Activated CD8-positive, alpha-beta T cell treated with anti-CD3 and anti-CD28 coated beads, Interleukin-2, amount 10 ng/mL, durations not matched to agents 7 days and 5 days (primary cell): ENCODE measurements at regions of chr6 and their contacts with region 1.

Region 1: GRCh38 chr6:35415065-35415991 is 36.8 kb upstream of the FANCE start:
- DNase-seq: peak; percentile 34
- ATAC-seq: no peak
- H3K4me3 Mint-ChIP-seq: no peak overlapping the region
- H3K27ac Mint-ChIP-seq: peak overlapping the region; percentile 78
- H3K4me1 Mint-ChIP-seq: peaks cover 84% of the 10 kb centered on the region
- H3K27me3 Mint-ChIP-seq: no peaks in the 10 kb centered on the region

Region 2: DNA sequence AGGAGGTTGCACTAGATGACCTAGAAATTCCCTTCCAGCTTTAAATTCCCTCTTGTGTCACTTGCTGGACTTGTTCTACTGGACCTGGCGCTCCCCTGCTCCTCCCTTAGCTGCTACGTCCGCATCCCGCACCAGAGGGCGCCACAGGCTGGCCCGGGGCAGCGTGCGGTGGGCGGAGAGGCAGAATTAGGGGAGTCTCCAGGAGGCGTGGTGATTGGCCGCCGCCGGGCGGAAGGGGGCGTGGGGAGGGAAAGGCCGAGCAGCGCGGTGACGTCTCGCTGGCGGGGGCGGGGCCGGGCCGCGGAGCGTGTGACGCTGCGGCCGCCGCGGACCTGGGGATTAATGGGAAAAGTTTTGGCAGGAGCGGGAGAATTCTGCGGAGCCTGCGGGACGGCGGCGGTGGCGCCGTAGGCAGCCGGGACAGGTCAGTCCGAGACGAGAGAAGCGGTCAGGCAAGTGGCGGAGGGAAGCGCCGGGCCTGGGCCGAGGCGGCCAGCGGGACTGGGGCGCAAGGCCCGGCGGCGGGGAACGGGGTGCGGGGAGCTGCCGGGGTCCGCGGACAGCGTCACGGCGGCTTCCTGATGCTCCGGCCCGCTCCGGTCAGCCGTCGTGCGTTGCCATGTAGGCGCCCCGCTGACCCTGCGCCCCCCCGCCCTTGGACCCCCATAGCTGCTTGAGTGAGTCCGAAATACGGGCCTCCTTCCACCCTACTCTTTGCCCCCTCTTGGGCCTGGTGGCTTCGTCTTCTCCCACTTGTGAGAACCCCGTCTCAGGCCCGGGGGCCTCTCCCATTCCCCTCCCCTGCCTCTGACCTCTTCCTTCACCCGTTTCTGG is 72.9 kb before region 1 on chr6 and contains the start of gene PPARD:
- CTCF ChIA-PET with region 1: interaction called, 28 read pairs
- POLR2A ChIA-PET with region 1: no interaction called
- DNase-seq: peak; percentile 98
- ATAC-seq: peak; percentile 99
- H3K4me3 Mint-ChIP-seq: peak within 1 kb of the TSS; percentile 90
- H3K27ac Mint-ChIP-seq: peak within 1 kb of the TSS; percentile 92
- H3K4me1 Mint-ChIP-seq: peaks cover 51% of the 10 kb centered on the region
- H3K27me3 Mint-ChIP-seq: peaks cover 4% of the 10 kb centered on the region
- total RNA-seq, gene PPARD: 36.3 to 36.7 TPM

Region 3: DNA sequence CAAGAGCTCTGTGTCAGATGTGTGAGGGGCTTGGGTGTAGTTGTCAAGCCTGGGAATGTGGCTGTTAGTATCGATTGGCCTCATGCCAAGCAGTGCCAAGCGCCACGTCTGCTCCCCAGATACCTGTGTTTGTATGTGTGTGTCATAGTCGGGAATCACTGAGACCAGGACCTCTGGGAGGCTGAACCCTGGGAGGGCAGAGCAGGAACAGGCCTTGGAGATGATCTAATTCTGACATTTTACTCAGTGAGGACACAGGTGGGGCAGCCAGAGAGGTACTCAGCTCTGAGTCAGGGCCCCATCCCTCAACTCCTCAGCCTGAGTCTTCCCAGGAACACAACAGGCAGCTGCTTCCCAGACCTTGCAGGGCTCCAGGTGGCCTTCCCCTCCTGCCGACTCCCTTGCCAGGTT is 14.4 kb before region 1 on chr6:
- CTCF ChIA-PET with region 1: interaction called, 10 read pairs
- POLR2A ChIA-PET with region 1: no interaction called
- DNase-seq: no peak
- ATAC-seq: no peak
- H3K4me3 Mint-ChIP-seq: no peak overlapping the region
- H3K27ac Mint-ChIP-seq: peak overlapping the region; percentile 81
- H3K4me1 Mint-ChIP-seq: peaks cover 33% of the 10 kb centered on the region
- H3K27me3 Mint-ChIP-seq: no peaks in the 10 kb centered on the region

Region 4: DNA sequence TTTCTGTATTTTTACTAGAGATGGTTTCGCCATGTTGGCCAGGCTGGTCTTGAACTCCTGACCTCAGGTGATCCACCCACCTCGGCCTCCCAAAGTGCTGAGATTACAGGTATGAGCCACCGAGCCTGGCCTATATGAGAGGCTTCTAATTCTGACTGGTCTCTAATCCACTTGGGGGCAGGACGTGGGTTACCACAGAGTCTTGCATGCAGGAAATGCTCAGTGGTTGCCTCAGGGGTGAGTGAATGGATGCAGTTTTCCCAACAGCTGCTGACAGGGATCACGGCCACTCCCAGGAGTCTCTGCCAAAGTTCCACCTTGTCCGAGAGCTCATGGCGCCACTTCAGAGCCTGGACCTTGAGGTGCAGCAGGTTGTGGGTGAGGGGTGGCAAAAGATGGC is 30.4 kb after region 1 on chr6:
- CTCF ChIA-PET with region 1: interaction called, 95 read pairs
- POLR2A ChIA-PET with region 1: interaction called, 5 read pairs
- DNase-seq: peak; percentile 78
- ATAC-seq: peak; percentile 37
- H3K4me3 Mint-ChIP-seq: no peak overlapping the region
- H3K27ac Mint-ChIP-seq: peak overlapping the region; percentile 63
- H3K4me1 Mint-ChIP-seq: peaks cover 31% of the 10 kb centered on the region
- H3K27me3 Mint-ChIP-seq: no peaks in the 10 kb centered on the region

Region 5: GRCh38 chr6:35468181-35468979 is 53.1 kb after region 1 on chr6 and contains the start of gene RPL10A:
- CTCF ChIA-PET with region 1: interaction called, 20 read pairs
- POLR2A ChIA-PET with region 1: no interaction called
- DNase-seq: peak; percentile 98
- ATAC-seq: peak; percentile 89
- H3K4me3 Mint-ChIP-seq: peak within 1 kb of the TSS; percentile 83
- H3K27ac Mint-ChIP-seq: peak within 1 kb of the TSS; percentile 99
- H3K4me1 Mint-ChIP-seq: peaks cover 39% of the 10 kb centered on the region
- H3K27me3 Mint-ChIP-seq: no peaks in the 10 kb centered on the region
- total RNA-seq, gene RPL10A: 1,398 to 1,443 TPM

Region 6: DNA sequence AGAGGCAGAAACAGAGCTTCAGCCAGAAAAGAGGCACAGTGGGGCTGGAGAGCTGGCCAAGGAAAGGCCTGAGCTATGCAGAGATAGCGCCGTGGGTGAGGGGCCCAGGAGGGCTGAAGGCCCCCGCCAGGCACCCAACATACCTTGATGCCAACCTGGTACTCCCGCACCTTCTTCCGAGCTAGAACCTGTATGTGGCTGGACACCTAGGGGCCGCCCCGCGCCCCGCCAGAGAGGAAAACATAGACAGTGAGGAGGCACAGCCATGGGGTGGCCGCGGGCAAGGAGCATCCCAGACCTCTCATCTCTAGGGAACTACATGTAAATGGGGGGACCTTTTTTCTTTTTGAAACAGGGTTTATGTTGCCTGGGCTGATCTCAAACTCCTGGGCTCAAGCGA is 64.8 kb after region 1 on chr6:
- CTCF ChIA-PET with region 1: no interaction called
- POLR2A ChIA-PET with region 1: no interaction called
- DNase-seq: no peak
- ATAC-seq: no peak
- H3K4me3 Mint-ChIP-seq: no peak overlapping the region
- H3K27ac Mint-ChIP-seq: no peak overlapping the region
- H3K4me1 Mint-ChIP-seq: no peaks in the 10 kb centered on the region
- H3K27me3 Mint-ChIP-seq: no peaks in the 10 kb centered on the region